ENCODE measurements at regions of chr3 and their contacts with region 1.

Region 1: DNA sequence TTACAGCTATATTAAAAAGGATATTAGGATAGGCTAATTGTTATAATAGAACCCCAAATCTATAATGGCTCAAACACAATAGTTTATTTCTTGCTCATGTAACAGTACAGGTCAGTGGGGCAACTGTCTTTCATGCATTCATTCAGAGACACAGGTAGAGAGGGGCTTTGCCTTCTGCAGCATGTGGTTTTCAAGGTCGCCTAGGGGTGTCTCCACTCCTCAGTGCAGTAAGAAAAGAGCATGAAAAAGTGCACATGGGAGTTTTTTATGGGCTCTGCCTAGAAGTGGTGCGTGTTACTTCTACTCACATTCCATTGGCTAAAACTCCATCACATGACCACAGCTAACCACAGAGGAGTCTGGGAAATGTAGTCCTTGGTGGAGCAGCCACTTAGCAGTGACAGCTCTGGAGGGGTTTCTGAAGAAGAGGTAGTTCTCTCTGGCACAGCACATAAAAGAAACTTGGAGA is 1.8 kb downstream of the ZBTB38 start:
- DNase-seq: peak; percentile 85
- ATAC-seq: peak; percentile 96
- H3K4me3 Mint-ChIP-seq: no peak overlapping the region
- H3K27ac Mint-ChIP-seq: peak overlapping the region; percentile 52
- H3K4me1 Mint-ChIP-seq: peaks cover 61% of the 10 kb centered on the region
- H3K27me3 Mint-ChIP-seq: no peaks in the 10 kb centered on the region

Region 2: DNA sequence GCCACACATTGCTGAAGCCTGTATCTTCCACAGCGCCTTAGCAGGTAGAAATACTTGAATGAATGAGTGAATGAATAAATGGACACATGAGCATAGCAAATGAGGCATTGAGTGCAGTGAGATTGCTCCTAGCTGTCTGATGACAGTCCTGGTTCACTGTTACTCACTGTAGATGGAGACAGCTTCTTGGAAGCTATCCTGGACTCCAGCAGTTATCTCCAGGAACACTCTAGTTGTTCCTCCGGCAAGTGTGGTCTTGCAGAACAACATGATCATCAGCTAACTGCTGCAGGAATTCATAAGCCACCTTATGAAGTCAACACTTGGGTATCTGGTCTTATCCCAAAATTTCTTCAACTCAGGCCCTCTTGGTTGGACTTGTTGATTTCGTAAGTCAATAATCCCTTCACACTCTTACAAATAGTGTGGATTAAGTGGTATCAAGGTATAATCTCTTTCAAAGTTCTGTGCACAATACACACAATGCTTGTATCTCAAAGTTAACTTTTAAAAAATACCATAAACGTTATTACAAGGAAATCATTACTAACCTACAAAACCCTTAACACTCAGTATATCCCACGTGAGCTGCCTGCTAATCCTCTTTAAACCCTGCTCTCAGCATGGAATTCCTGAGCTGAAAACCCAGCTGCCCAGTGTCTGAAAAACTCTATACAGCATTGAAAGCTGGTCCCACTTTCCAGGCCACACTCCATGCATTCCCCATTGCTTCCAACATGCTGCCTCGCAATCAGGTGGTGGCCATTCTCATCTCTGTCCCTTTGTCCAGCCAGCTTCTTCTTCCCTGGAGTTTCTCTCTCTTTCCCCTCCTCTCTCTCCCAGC is 16.2 kb before region 1 on chr3:
- CTCF ChIA-PET with region 1: no interaction called
- DNase-seq: no peak
- ATAC-seq: no peak
- H3K4me3 Mint-ChIP-seq: no peak overlapping the region
- H3K27ac Mint-ChIP-seq: no peak overlapping the region
- H3K4me1 Mint-ChIP-seq: no peaks in the 10 kb centered on the region
- H3K27me3 Mint-ChIP-seq: peaks cover 17% of the 10 kb centered on the region

Region 3: GRCh38 chr3:141386611-141387111 is 16.6 kb after region 1 on chr3:
- CTCF ChIA-PET with region 1: interaction called, 19 read pairs
- DNase-seq: no peak
- ATAC-seq: no peak
- H3K4me3 Mint-ChIP-seq: peak overlapping the region; percentile 18
- H3K27ac Mint-ChIP-seq: peak overlapping the region; percentile 20
- H3K4me1 Mint-ChIP-seq: peaks cover 57% of the 10 kb centered on the region
- H3K27me3 Mint-ChIP-seq: no peaks in the 10 kb centered on the region

Region 4: GRCh38 chr3:141412087-141412935 is 42.2 kb after region 1 on chr3:
- CTCF ChIA-PET with region 1: interaction called, 14 read pairs
- DNase-seq: peak; percentile 78
- ATAC-seq: peak; percentile 43
- H3K4me3 Mint-ChIP-seq: peak overlapping the region; percentile 75
- H3K27ac Mint-ChIP-seq: peak overlapping the region; percentile 99
- H3K4me1 Mint-ChIP-seq: peaks cover 80% of the 10 kb centered on the region
- H3K27me3 Mint-ChIP-seq: no peaks in the 10 kb centered on the region

Region 5: DNA sequence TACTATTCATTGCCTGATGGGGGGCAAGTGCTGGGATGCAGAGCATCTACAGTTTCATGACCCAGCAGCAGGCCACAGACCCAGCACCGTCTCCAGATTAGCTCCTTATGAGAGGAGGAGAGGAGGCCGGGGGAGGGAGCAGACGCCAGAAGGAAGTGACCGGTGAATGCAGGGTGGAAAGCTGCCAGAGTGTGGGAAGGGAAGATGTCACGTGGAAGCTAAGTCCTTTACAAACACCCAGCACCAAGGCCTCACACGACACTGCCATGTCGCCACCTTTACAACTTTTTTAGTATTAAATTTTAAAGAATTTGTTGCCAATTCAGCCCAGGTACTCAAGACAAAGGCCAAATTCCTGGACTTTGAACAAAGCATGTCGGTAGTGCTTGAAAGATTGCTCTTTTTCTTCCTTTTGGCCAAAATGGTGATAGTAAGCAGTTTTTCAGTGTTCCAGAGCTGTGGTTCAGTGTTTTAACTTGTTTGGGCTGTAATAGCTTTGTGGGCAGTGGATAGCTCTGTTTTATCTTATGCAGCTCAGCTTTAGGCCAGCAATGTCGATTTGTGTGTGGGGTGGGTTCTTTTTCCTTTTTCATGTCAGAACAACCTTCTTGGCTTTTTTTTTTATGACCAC is 56.4 kb after region 1 on chr3:
- CTCF ChIA-PET with region 1: interaction called, 11 read pairs
- DNase-seq: no peak
- ATAC-seq: no peak
- H3K4me3 Mint-ChIP-seq: no peak overlapping the region
- H3K27ac Mint-ChIP-seq: no peak overlapping the region
- H3K4me1 Mint-ChIP-seq: peaks cover 31% of the 10 kb centered on the region
- H3K27me3 Mint-ChIP-seq: no peaks in the 10 kb centered on the region